RWPE1 (cell line): ENCODE measurements at regions of chr19 and their contacts with region 1.

Region 1: GRCh38 chr19:38683393-38684080 is 36.1 kb downstream of the ACTN4 start:
- DNase-seq: peak; percentile 94
- H3K27ac ChIP-seq: peak overlapping the region; percentile 100
- CTCF ChIP-seq: no peak

Region 2: GRCh38 chr19:38650911-38651584 is 32.5 kb before region 1 on chr19:
- CTCF ChIA-PET with region 1: interaction called, 11 read pairs
- POLR2A ChIA-PET with region 1: interaction called, 8 read pairs
- DNase-seq: peak; percentile 69
- H3K27ac ChIP-seq: peak overlapping the region; percentile 98
- CTCF ChIP-seq: no peak